HCT116 (cell line): ENCODE measurements at regions of chr9 and their contacts with region 1.

Region 1: DNA sequence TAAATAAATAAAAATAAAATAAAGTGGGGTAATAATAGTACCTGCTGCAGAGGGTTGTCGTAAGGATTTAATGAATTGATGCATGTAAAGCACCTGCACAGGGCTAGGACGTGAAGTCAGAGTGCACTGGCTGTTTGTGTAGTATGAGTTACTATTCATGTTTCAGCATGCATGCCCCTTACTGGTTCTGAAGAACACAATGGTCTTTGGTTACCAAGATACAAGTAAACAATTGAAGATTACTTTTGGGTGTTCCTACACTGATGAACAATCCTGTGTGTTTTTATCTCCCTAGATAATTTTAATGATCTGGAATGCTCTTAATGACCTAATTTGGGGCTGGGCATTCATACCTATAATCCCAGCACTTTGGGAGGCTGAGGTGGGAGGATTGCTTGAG is 23.2 kb upstream of the PRRC2B start:
- DNase-seq: no peak
- ATAC-seq: no peak
- H3K4me3 ChIP-seq: no peak overlapping the region
- H3K27ac ChIP-seq: no peak overlapping the region
- H3K4me1 ChIP-seq: peaks cover 18 to 26% of the 10 kb centered on the region in 2 experiments; a peak in 3 of 4 replicates
- H3K27me3 ChIP-seq: no peaks in the 10 kb centered on the region
- CTCF ChIP-seq: no peak
- POLR2A ChIP-seq: no peak
- RAD21 ChIP-seq: no peak

Region 2: GRCh38 chr9:131008909-131009618 is 361.6 kb before region 1 on chr9 and contains the start of gene LAMC3:
- CTCF ChIA-PET with region 1: no interaction called
- POLR2A ChIA-PET with region 1: no interaction called
- RAD21 ChIA-PET with region 1: no interaction called
- intact Hi-C with region 1: no loop called
- DNase-seq: no peak
- ATAC-seq: peak; percentile 89
- H3K4me3 ChIP-seq: peak within 1 kb of the TSS; percentile 50 to 59
- H3K27ac ChIP-seq: no peak within 1 kb of the TSS; the same call in 1 of the 2 replicates
- H3K4me1 ChIP-seq: peaks cover 3 to 14% of the 10 kb centered on the region in 2 experiments
- H3K27me3 ChIP-seq: no peaks in the 10 kb centered on the region
- CTCF ChIP-seq: peak; percentile 30 to 61 (median 50); a peak in 5 of 6 replicates
- POLR2A ChIP-seq: no peak
- RAD21 ChIP-seq: peak; percentile 62
- total RNA-seq, gene LAMC3: 7.7 TPM

Region 3: GRCh38 chr9:131382850-131383729 is 12.5 kb after region 1 on chr9:
- CTCF ChIA-PET with region 1: no interaction called
- POLR2A ChIA-PET with region 1: interaction called, 23 read pairs
- RAD21 ChIA-PET with region 1: no interaction called
- intact Hi-C with region 1: no loop called
- DNase-seq: no peak
- ATAC-seq: peak; percentile 90
- H3K4me3 ChIP-seq: no peak overlapping the region
- H3K27ac ChIP-seq: peak overlapping the region; percentile 40
- H3K4me1 ChIP-seq: peaks cover 20 to 21% of the 10 kb centered on the region in 2 experiments
- H3K27me3 ChIP-seq: no peaks in the 10 kb centered on the region
- CTCF ChIP-seq: no peak
- POLR2A ChIP-seq: no peak
- RAD21 ChIP-seq: no peak